ENCODE measurements at regions of chr7 and their contacts with region 1.

Region 1: GRCh38 chr7:111083413-111083812 is 7.5 kb upstream of the LRRN3 start:
- DNase-seq: peak in 8 of 9 donors; percentile 52 to 90 (median 84)
- ATAC-seq: peak; percentile 99
- H3K4me3 ChIP-seq: peak overlapping the region; percentile 12
- H3K4me3 Mint-ChIP-seq: peak overlapping the region; percentile 37 to 80 (median 68)
- H3K27ac ChIP-seq: peak overlapping the region; percentile 70
- H3K27ac Mint-ChIP-seq: peak overlapping the region; percentile 74 to 93 (median 89)
- H3K4me1 ChIP-seq: peaks cover 30 to 49% of the 10 kb centered on the region in 2 donors
- H3K4me1 Mint-ChIP-seq: peaks cover 25 to 84% (median 74%) of the 10 kb centered on the region in 7 donors
- H3K27me3 ChIP-seq: no peaks in the 10 kb centered on the region
- H3K27me3 Mint-ChIP-seq: no peaks in the 10 kb centered on the region

Region 2: GRCh38 chr7:110914263-110914662 is 169.2 kb before region 1 on chr7:
- CTCF ChIA-PET with region 1: no interaction called
- POLR2A ChIA-PET with region 1: no interaction called
- intact Hi-C with region 1: loop called in 1 of 2 experiments (anchors 5 kb)
- DNase-seq: no peak
- ATAC-seq: no peak
- H3K4me3 ChIP-seq: no peak overlapping the region
- H3K4me3 Mint-ChIP-seq: no peak overlapping the region
- H3K27ac ChIP-seq: no peak overlapping the region
- H3K27ac Mint-ChIP-seq: no peak overlapping the region
- H3K4me1 ChIP-seq: no peaks in the 10 kb centered on the region
- H3K4me1 Mint-ChIP-seq: peaks cover 2 to 23% (median 10%) of the 10 kb centered on the region in 7 donors
- H3K27me3 ChIP-seq: no peaks in the 10 kb centered on the region
- H3K27me3 Mint-ChIP-seq: no peaks in the 10 kb centered on the region

Region 3: DNA sequence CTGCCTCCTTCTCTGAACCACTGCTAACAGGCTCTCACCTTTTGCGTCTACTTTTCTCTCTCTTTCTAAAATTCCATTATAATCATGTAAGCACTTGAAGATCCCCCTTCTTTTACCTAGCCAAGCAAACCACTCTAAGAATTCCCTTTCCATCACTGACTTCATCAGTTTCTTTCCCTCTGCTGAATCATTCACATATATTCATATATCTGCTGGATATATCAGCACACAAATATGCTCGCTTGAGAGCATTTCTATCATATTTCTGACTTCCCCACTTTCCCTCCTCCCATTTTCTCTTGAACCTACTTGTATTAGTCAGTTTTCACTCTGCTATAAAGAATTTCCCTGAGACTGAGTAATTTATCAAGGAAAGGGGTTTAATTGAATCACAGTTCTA is 76.7 kb before region 1 on chr7:
- CTCF ChIA-PET with region 1: interaction called, 3 read pairs
- POLR2A ChIA-PET with region 1: interaction called, 37 read pairs
- intact Hi-C with region 1: loop called in 1 of 2 experiments (anchors 1 kb)
- DNase-seq: no peak
- ATAC-seq: no peak
- H3K4me3 ChIP-seq: no peak overlapping the region
- H3K4me3 Mint-ChIP-seq: no peak overlapping the region
- H3K27ac ChIP-seq: no peak overlapping the region
- H3K27ac Mint-ChIP-seq: no peak overlapping the region
- H3K4me1 ChIP-seq: peaks cover 0 to 44% of the 10 kb centered on the region in 2 donors
- H3K4me1 Mint-ChIP-seq: peaks cover 10 to 34% (median 14%) of the 10 kb centered on the region in 7 donors
- H3K27me3 ChIP-seq: no peaks in the 10 kb centered on the region
- H3K27me3 Mint-ChIP-seq: no peaks in the 10 kb centered on the region

Region 4: GRCh38 chr7:111043533-111043932 is 39.9 kb before region 1 on chr7:
- CTCF ChIA-PET with region 1: no interaction called
- POLR2A ChIA-PET with region 1: interaction called, 5 read pairs
- intact Hi-C with region 1: loop called in 1 of 2 experiments (anchors 1 kb)
- DNase-seq: no peak
- ATAC-seq: no peak
- H3K4me3 ChIP-seq: no peak overlapping the region
- H3K4me3 Mint-ChIP-seq: no peak overlapping the region
- H3K27ac ChIP-seq: no peak overlapping the region
- H3K27ac Mint-ChIP-seq: no peak overlapping the region
- H3K4me1 ChIP-seq: peaks cover 0 to 6% of the 10 kb centered on the region in 2 donors
- H3K4me1 Mint-ChIP-seq: peaks cover 4 to 30% (median 14%) of the 10 kb centered on the region in 7 donors
- H3K27me3 ChIP-seq: no peaks in the 10 kb centered on the region
- H3K27me3 Mint-ChIP-seq: no peaks in the 10 kb centered on the region

Region 5: GRCh38 chr7:111183321-111183720 is 99.9 kb after region 1 on chr7:
- CTCF ChIA-PET with region 1: no interaction called
- POLR2A ChIA-PET with region 1: no interaction called
- intact Hi-C with region 1: no loop called
- DNase-seq: no peak
- ATAC-seq: no peak
- H3K4me3 ChIP-seq: no peak overlapping the region
- H3K4me3 Mint-ChIP-seq: no peak overlapping the region
- H3K27ac ChIP-seq: no peak overlapping the region
- H3K27ac Mint-ChIP-seq: no peak overlapping the region
- H3K4me1 ChIP-seq: no peaks in the 10 kb centered on the region
- H3K4me1 Mint-ChIP-seq: peaks cover 0 to 4% (median 0%) of the 10 kb centered on the region in 7 donors
- H3K27me3 ChIP-seq: no peaks in the 10 kb centered on the region
- H3K27me3 Mint-ChIP-seq: no peaks in the 10 kb centered on the region

Region 6: GRCh38 chr7:112789817-112790585 is 1706.6 kb after region 1 on chr7 and contains the start of gene TMEM168:
- CTCF ChIA-PET with region 1: no interaction called
- POLR2A ChIA-PET with region 1: no interaction called
- intact Hi-C with region 1: loop called in 1 of 2 experiments (anchors 5 kb)
- DNase-seq: peak; percentile 75 to 91 (median 83)
- ATAC-seq: peak; percentile 94
- H3K4me3 ChIP-seq: peak within 1 kb of the TSS; percentile 98
- H3K4me3 Mint-ChIP-seq: peak within 1 kb of the TSS; percentile 90 to 97 (median 95)
- H3K27ac ChIP-seq: peak within 1 kb of the TSS; percentile 85
- H3K27ac Mint-ChIP-seq: peak within 1 kb of the TSS; percentile 63 to 93 (median 88)
- H3K4me1 ChIP-seq: peaks cover 13 to 23% of the 10 kb centered on the region in 2 donors
- H3K4me1 Mint-ChIP-seq: peaks cover 27 to 50% (median 36%) of the 10 kb centered on the region in 7 donors
- H3K27me3 ChIP-seq: no peaks in the 10 kb centered on the region
- H3K27me3 Mint-ChIP-seq: no peaks in the 10 kb centered on the region
- total RNA-seq, gene TMEM168: 18.3 to 30.1 (median 20.7) TPM